ENCODE measurements at regions of chr2 and their contacts with region 1.

Region 1: DNA sequence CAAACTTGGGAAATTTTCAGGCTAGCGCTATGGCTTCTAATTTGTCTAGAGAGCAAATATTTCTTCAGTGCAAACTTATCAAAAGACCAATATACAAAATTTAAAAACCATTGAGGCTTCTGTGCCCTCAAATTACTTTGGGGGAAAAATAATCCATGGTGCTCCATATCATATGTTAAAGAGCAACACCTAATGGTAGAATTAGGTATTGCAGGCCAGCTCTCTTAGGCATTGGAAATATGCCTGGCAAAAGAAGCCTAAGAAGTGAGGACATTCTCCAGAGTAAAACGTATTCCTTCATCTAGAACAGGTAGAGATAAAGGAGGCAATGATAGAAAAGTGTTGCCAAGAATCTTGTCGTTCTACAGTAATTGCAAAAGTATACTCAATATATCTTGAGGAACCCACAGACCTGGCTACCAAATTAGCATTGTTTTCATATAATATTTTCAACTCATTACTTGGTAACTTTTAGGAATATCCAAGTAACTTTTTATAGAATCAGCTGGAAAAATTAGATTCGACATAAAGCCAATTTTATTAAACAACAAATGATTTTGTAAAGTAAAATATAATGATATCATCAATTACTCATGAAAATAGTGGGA is 401.1 kb downstream of the BCL11A start:
- DNase-seq: no peak
- H3K4me3 Mint-ChIP-seq: no peak overlapping the region
- H3K27ac Mint-ChIP-seq: no peak overlapping the region
- H3K4me1 Mint-ChIP-seq: no peaks in the 10 kb centered on the region
- H3K27me3 Mint-ChIP-seq: peaks cover 4% of the 10 kb centered on the region

Region 2: GRCh38 chr2:59301466-59302402 is 850.6 kb before region 1 on chr2:
- CTCF ChIA-PET with region 1: interaction called, 5 read pairs
- POLR2A ChIA-PET with region 1: no interaction called
- intact Hi-C with region 1: loop called (anchors 2 kb)
- DNase-seq: no peak
- H3K4me3 Mint-ChIP-seq: no peak overlapping the region
- H3K27ac Mint-ChIP-seq: no peak overlapping the region
- H3K4me1 Mint-ChIP-seq: no peaks in the 10 kb centered on the region
- H3K27me3 Mint-ChIP-seq: peaks cover 2% of the 10 kb centered on the region